K562 (cell line): ENCODE measurements at regions of chr6 and their contacts with region 1.

Region 1: GRCh38 chr6:16332175-16332542 is 93.8 kb downstream of the GMPR start:
- DNase-seq: peak; percentile 91 to 92 (median 91)
- ATAC-seq: peak; percentile 91
- H3K4me3 ChIP-seq: no peak overlapping the region
- H3K27ac ChIP-seq: no peak overlapping the region
- H3K4me1 ChIP-seq: peaks cover 9 to 12% of the 10 kb centered on the region in 2 experiments; a peak in 4 of 5 replicates
- H3K27me3 ChIP-seq: no peaks in the 10 kb centered on the region; a peak in 1 of 5 replicates
- CTCF ChIP-seq: peak; percentile 94 to 99 (median 97)
- EP300 ChIP-seq: peak; percentile 35; the same call in 1 of the 2 replicates
- POLR2A ChIP-seq: no peak
- RAD21 ChIP-seq: peak; percentile 98 to 99

Region 2: DNA sequence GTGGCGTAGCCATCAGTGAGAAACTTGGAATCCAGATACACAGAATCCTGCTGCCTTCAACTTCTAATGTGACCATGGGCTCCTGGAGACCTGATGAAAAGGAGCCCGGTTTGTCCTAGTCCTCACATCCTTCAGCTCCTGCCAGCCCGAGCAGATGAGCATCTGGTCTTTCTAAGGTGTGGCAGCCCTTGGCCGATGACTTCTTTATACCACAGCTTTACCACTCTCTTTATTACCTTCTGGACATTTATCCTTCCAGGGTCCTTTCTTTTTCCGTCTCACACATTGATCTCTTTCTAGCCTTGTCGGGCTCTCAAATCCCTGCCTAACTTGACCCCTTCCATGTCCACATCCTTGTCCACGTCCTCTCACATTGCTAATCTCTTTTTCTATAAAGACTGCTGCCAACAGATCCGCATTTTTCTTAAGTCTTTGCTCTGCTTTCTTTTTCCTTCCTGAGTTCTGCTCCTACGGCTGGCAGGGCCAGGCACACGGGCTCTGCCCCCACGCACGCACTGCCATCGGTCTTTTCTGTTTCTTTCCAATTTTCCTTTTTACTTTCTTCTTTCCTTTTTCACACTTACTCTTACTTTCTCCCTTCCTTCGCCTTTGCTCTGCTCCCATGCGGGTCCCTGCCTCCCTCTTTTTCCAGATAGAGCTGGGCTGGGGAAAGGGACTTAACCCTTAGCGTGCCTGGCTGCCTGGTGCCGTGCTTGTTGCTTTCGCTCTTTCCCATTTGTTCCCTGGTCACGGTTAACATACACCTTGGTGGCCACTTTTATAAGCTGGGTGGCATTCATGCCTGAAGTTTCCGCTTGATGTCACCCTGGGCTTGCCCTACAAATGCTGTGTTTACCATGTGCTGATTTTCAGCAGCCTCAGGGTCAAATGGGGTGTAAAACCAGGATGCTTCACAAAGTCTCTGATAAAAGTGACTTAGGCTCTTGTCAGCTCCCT is 103.2 kb before region 1 on chr6:
- CTCF ChIA-PET with region 1: no interaction called
- POLR2A ChIA-PET with region 1: no interaction called
- in situ Hi-C with region 1: no loop called
- intact Hi-C with region 1: loop called (anchors 2 kb)
- DNase-seq: no peak
- ATAC-seq: peak; percentile 8
- H3K4me3 ChIP-seq: no peak overlapping the region
- H3K27ac ChIP-seq: no peak overlapping the region
- H3K4me1 ChIP-seq: peaks cover 24 to 53% of the 10 kb centered on the region in 2 experiments
- H3K27me3 ChIP-seq: no peaks in the 10 kb centered on the region
- CTCF ChIP-seq: peak in 1 of 3 experiments; percentile 38; a peak in 2 of 6 replicates
- EP300 ChIP-seq: no peak
- POLR2A ChIP-seq: no peak
- RAD21 ChIP-seq: peak in 1 of 2 experiments; percentile 45; a peak in 2 of 4 replicates

Region 3: GRCh38 chr6:16273256-16273655 is 58.9 kb before region 1 on chr6:
- CTCF ChIA-PET with region 1: no interaction called
- POLR2A ChIA-PET with region 1: no interaction called
- in situ Hi-C with region 1: no loop called
- intact Hi-C with region 1: no loop called
- DNase-seq: no peak
- ATAC-seq: no peak
- H3K4me3 ChIP-seq: no peak overlapping the region
- H3K27ac ChIP-seq: no peak overlapping the region; the same call in 2 of the 3 replicates
- H3K4me1 ChIP-seq: peaks cover 29 to 59% of the 10 kb centered on the region in 2 experiments
- H3K27me3 ChIP-seq: no peaks in the 10 kb centered on the region
- CTCF ChIP-seq: no peak
- EP300 ChIP-seq: no peak
- POLR2A ChIP-seq: no peak
- RAD21 ChIP-seq: no peak

Region 4: GRCh38 chr6:16301511-16301910 is 30.6 kb before region 1 on chr6:
- CTCF ChIA-PET with region 1: no interaction called
- POLR2A ChIA-PET with region 1: no interaction called
- in situ Hi-C with region 1: no loop called
- intact Hi-C with region 1: no loop called
- DNase-seq: no peak
- ATAC-seq: no peak
- H3K4me3 ChIP-seq: no peak overlapping the region
- H3K27ac ChIP-seq: no peak overlapping the region
- H3K4me1 ChIP-seq: peaks cover 8 to 18% of the 10 kb centered on the region in 2 experiments; a peak in 4 of 5 replicates
- H3K27me3 ChIP-seq: no peaks in the 10 kb centered on the region
- CTCF ChIP-seq: no peak
- EP300 ChIP-seq: no peak
- POLR2A ChIP-seq: no peak
- RAD21 ChIP-seq: no peak

Region 5: DNA sequence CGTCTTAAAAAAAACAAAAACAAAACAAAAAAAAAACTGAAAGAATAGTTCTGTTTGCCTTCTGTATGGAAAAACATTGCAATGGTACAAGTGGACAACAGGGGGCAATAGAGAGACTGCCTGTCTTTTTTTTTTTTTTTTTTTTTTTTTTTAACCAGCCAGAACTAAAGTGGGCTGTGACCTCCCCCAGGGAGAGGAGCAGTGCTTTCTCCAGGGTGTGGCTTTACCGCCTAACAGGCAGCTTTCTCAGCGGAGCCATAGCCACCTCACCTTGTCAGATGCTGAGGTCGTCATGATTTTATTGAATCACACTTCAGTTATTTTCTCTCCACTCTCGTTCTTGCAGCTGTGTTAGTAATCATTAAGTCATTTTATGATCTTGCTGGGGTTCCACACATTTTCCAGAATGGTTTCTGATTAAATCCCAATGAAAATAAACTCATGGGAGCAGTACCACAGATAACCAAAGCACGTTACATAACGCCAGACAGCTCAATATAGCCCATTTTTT is 15.4 kb before region 1 on chr6:
- CTCF ChIA-PET with region 1: interaction called, 3 read pairs
- POLR2A ChIA-PET with region 1: no interaction called
- in situ Hi-C with region 1: no loop called
- intact Hi-C with region 1: loop called (anchors 2 kb)
- DNase-seq: peak; percentile 83 to 91 (median 88)
- ATAC-seq: peak; percentile 84
- H3K4me3 ChIP-seq: no peak overlapping the region
- H3K27ac ChIP-seq: no peak overlapping the region
- H3K4me1 ChIP-seq: peaks cover 18 to 34% of the 10 kb centered on the region in 2 experiments; a peak in 4 of 5 replicates
- H3K27me3 ChIP-seq: no peaks in the 10 kb centered on the region; a peak in 1 of 5 replicates
- CTCF ChIP-seq: peak; percentile 77 to 92 (median 89)
- EP300 ChIP-seq: no peak
- POLR2A ChIP-seq: no peak
- RAD21 ChIP-seq: peak in 1 of 2 experiments; percentile 36; a peak in 2 of 4 replicates

Region 6: DNA sequence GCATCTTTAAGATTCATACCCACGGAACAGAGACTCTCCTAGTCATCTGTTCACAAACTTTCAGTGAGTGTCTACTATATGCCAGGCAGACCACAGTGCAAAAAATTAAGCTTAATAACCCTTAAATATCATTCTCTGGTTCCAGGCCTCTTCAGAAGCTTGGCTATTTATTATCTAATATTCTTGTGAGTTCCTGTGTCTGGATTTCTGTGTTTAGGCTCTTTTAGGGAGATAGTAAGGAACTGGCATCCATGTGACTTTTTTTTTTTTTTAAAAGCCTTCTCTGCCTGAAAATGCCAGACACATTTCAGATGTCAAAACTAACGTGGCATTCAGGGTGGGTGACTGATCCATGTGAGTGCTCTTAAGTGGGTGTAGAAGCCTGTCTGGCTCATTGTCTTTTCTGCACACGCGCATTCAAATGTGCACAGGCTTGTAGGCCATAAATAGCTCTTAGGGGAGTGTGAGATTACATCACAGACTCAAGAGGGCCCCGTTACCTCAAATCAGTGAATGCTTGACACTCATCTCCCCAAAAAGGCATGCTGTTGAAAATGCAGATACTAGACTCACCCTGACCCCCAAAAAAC is 48.2 kb after region 1 on chr6:
- CTCF ChIA-PET with region 1: no interaction called
- POLR2A ChIA-PET with region 1: no interaction called
- in situ Hi-C with region 1: no loop called
- intact Hi-C with region 1: no loop called
- DNase-seq: no peak
- ATAC-seq: no peak
- H3K4me3 ChIP-seq: no peak overlapping the region
- H3K27ac ChIP-seq: no peak overlapping the region
- H3K4me1 ChIP-seq: no peaks in the 10 kb centered on the region
- H3K27me3 ChIP-seq: peaks cover 17 to 24% of the 10 kb centered on the region in 2 experiments
- CTCF ChIP-seq: no peak
- EP300 ChIP-seq: no peak
- POLR2A ChIP-seq: no peak
- RAD21 ChIP-seq: no peak

Region 7: DNA sequence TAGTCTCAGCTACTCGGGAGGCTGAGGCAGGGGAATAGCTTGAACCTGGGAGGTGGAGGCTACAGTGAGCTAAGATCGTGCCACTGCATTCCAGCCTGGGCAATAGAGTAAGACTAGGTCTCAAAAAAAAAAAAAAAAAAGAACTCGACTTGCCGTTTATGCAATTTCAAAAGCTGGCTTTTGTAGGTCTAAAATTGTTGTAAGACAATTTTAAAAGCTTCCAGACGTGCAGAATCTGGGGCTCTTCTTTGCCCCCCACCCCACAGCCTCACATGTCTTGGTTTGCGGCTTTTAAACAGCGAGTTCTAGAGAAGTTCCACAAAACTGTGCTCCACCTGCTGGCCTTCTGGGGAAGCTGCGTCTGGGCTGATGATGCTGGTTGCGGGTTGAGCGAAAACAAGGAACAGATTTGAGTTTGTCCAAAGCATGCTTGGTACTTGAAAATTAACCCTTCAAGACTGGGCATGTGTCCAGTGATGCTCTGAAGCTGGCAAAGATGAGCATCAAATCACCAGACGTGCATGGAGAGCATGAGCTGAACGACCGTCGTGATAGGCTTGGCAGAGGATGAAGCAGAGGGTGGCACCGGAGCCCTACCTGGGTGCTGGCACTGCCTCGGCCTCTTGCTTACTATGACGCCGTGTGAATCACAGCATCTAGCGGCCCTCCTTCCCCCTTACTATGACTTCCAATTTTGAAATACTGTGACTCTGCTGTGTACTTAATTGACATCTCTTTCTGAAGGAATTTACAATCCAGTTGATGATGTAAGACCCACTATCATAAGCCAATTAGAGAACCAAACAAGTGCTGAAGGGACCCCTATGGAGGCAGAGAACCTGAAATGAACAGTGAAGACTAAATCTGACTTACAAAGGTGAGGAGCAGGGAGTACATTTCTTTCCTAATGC is 77.6 kb after region 1 on chr6:
- CTCF ChIA-PET with region 1: interaction called, 68 read pairs
- POLR2A ChIA-PET with region 1: no interaction called
- in situ Hi-C with region 1: loop called (anchors 5 kb)
- intact Hi-C with region 1: loop called (anchors 1 kb)
- DNase-seq: peak; percentile 53 to 77 (median 64)
- ATAC-seq: peak; percentile 96
- H3K4me3 ChIP-seq: no peak overlapping the region
- H3K27ac ChIP-seq: no peak overlapping the region
- H3K4me1 ChIP-seq: no peaks in the 10 kb centered on the region; a peak in 1 of 5 replicates
- H3K27me3 ChIP-seq: peaks cover 24 to 36% of the 10 kb centered on the region in 2 experiments; a peak in 4 of 5 replicates
- CTCF ChIP-seq: peak; percentile 86 to 93 (median 90)
- EP300 ChIP-seq: no peak
- POLR2A ChIP-seq: no peak
- RAD21 ChIP-seq: peak; percentile 80 to 87

Region 8: DNA sequence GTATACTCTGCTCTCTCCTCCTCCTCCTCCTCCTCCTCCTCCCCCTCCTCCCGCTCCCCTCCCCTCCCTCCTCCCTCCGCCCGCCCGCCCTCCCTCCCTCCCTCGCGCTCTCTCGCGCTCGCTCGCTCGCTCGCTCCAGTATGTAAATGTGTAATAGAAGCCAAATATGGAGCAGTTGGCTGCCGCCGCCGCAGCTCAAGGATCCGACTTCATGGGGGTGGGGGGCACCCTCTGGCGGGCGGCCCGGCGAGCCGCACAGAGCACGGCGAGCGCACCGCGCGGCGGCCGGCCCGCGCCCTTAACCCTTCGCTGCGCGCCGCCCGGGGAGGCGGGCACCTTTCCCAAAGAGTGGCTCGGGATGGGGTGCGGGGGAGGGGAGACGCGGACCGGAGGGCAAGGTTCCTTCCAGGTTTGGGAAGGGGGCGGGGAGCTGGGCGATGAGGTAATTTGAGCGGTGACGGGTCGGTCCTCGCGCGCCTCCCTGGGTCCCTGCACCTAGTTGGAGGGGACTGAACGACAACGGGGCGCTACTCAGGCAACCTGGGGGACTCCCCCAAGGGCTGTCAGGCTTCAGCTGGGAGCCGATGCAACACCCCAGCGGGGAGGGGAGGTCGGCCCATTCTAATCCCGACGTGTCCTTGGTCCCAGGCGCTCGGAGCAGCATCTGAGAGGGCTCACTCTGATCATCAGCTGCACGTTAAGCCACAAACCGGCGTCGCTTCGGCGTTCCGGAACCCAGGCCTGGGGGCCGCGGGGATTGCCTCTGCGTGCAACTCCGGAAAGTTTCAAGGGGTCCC is 429.5 kb after region 1 on chr6:
- CTCF ChIA-PET with region 1: interaction called, 5 read pairs
- POLR2A ChIA-PET with region 1: no interaction called
- in situ Hi-C with region 1: loop called (anchors 5 kb)
- intact Hi-C with region 1: loop called (anchors 5 kb)
- DNase-seq: peak; percentile 64 to 82 (median 70)
- ATAC-seq: peak; percentile 81
- H3K4me3 ChIP-seq: peak overlapping the region; percentile 43
- H3K27ac ChIP-seq: peak overlapping the region; percentile 25; the same call in 1 of the 3 replicates
- H3K4me1 ChIP-seq: peaks cover 3 to 27% of the 10 kb centered on the region in 2 experiments; a peak in 3 of 5 replicates
- H3K27me3 ChIP-seq: peaks cover 13 to 17% of the 10 kb centered on the region in 2 experiments; a peak in 4 of 5 replicates
- CTCF ChIP-seq: peak in 2 of 3 experiments; percentile 33 to 71; a peak in 4 of 6 replicates
- EP300 ChIP-seq: no peak
- POLR2A ChIP-seq: no peak
- RAD21 ChIP-seq: peak; percentile 22 to 50; a peak in 3 of 4 replicates

Region 9: DNA sequence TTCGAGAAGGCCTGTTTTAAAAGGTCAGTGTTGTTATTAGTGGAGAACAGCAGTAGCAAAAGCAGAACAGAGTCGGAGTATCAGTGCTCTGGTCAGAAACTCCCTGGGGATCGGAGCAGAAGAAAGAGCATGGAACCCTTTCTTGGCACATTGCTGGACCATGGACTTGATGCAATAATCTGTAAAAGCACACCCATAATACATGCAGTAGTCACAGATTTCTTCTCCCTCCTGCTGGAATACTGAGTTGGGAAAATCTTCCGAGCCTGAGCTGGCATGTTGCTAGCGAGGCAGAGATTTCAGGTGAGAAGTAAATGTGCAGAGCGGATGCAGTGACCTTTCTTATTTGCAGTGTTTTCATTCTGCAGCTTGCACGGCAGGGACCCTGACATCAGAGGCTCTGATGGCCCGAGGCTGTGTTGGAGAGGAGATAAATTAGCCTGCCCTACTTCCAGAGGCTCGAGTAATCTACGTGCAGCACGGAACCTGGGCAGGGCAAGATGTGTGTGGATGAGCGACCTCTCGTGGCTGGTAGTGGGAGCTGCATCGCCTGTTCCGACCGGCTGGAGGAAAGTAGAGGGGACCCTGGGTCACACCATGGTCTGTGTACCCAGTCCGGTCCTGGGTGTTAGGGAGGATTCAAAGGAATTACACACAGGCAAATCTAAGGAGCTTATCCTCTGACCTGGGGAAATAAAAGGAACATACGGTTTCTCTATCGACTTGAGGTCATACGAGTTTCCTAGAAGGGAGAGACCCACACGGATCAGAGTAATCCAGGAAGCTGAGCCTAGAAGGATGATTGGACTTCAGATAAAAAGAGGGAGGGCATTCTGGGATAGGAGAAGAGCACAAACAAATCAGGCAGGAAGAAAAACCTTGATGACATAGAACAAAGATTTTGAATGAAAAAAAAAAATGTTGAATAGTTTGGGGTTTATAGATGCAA is 632.7 kb after region 1 on chr6:
- CTCF ChIA-PET with region 1: interaction called, 3 read pairs
- POLR2A ChIA-PET with region 1: no interaction called
- in situ Hi-C with region 1: no loop called
- intact Hi-C with region 1: loop called (anchors 5 kb)
- DNase-seq: peak; percentile 74 to 79 (median 76)
- ATAC-seq: peak; percentile 100
- H3K4me3 ChIP-seq: no peak overlapping the region
- H3K27ac ChIP-seq: no peak overlapping the region
- H3K4me1 ChIP-seq: no peaks in the 10 kb centered on the region
- H3K27me3 ChIP-seq: peaks cover 0 to 9% of the 10 kb centered on the region in 2 experiments; a peak in 1 of 5 replicates
- CTCF ChIP-seq: peak; percentile 87 to 96 (median 93)
- EP300 ChIP-seq: no peak
- POLR2A ChIP-seq: no peak
- RAD21 ChIP-seq: peak; percentile 85 to 88